ENCODE measurements at regions of chr16 and their contacts with region 1.

Region 1: GRCh38 chr16:84484579-84485254 is 19.7 kb downstream of the MEAK7 start:
- DNase-seq: peak; percentile 72 to 83 (median 74)
- ATAC-seq: peak; percentile 92
- H3K4me3 ChIP-seq: no peak overlapping the region
- H3K27ac ChIP-seq: no peak overlapping the region
- H3K4me1 ChIP-seq: peaks cover 0 to 16% of the 10 kb centered on the region in 2 experiments; a peak in 2 of 5 replicates
- H3K27me3 ChIP-seq: no peaks in the 10 kb centered on the region
- CTCF ChIP-seq: peak; percentile 88 to 94 (median 91)
- EP300 ChIP-seq: no peak
- POLR2A ChIP-seq: no peak
- RAD21 ChIP-seq: peak; percentile 95 to 97

Region 2: GRCh38 chr16:84062734-84063640 is 421.7 kb before region 1 on chr16:
- CTCF ChIA-PET with region 1: interaction called, 3 read pairs
- POLR2A ChIA-PET with region 1: no interaction called
- in situ Hi-C with region 1: loop called (anchors 10 kb)
- intact Hi-C with region 1: no loop called
- DNase-seq: peak; percentile 85 to 90 (median 86)
- ATAC-seq: peak; percentile 99
- H3K4me3 ChIP-seq: no peak overlapping the region
- H3K27ac ChIP-seq: no peak overlapping the region
- H3K4me1 ChIP-seq: peaks cover 0 to 6% of the 10 kb centered on the region in 2 experiments; a peak in 1 of 5 replicates
- H3K27me3 ChIP-seq: no peaks in the 10 kb centered on the region
- CTCF ChIP-seq: peak; percentile 85 to 99 (median 92)
- EP300 ChIP-seq: no peak
- POLR2A ChIP-seq: no peak
- RAD21 ChIP-seq: peak; percentile 64 to 84

Region 3: GRCh38 chr16:84186685-84187437 is 297.9 kb before region 1 on chr16 and contains the start of gene TAF1C:
- CTCF ChIA-PET with region 1: interaction called, 3 read pairs
- POLR2A ChIA-PET with region 1: no interaction called
- in situ Hi-C with region 1: no loop called
- intact Hi-C with region 1: loop called (anchors 5 kb)
- DNase-seq: peak; percentile 98 to 99 (median 99)
- ATAC-seq: peak; percentile 95
- H3K4me3 ChIP-seq: peak within 1 kb of the TSS; percentile 94
- H3K27ac ChIP-seq: peak within 1 kb of the TSS; percentile 78
- H3K4me1 ChIP-seq: peaks cover 5 to 34% of the 10 kb centered on the region in 2 experiments; a peak in 4 of 5 replicates
- H3K27me3 ChIP-seq: peaks cover 2 to 10% of the 10 kb centered on the region in 2 experiments; a peak in 1 of 5 replicates
- CTCF ChIP-seq: peak; percentile 98 to 99 (median 99)
- EP300 ChIP-seq: peak; percentile 62
- POLR2A ChIP-seq: peak; percentile 87
- RAD21 ChIP-seq: peak; percentile 80 to 89
- polyA plus RNA-seq, gene TAF1C: 1.5 TPM

Region 4: DNA sequence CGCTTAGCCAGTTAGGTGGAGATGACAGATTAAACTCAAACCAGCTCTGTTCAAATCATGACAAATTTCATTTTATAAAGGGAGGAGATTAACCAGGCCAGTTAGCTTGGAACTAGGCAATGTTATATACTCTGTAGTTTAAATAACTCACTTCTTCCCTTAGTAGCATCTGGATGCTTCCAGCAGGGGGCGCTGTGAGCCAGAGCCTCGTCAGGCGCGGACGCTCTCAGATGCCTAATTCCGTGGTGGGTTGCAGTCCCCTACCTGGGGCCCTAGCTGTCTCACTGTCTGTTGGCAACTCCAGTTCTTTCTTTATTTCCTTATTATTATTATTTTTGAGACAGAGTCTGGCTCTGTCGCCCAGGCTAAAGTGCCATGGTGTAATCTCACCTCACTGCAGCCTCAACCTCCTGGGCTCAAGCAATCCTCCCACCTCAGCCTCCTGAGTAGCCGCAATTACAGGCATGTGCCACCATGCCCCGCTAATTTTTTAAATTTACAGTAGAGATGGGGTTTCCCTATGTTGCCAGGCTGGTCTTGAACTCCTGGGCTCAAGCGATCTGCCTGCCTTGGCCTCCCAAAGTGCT is 207.4 kb before region 1 on chr16:
- CTCF ChIA-PET with region 1: interaction called, 15 read pairs
- POLR2A ChIA-PET with region 1: no interaction called
- in situ Hi-C with region 1: loop called (anchors 5 kb)
- intact Hi-C with region 1: loop called (anchors 1 kb)
- DNase-seq: peak; percentile 61 to 84 (median 80)
- ATAC-seq: peak; percentile 91
- H3K4me3 ChIP-seq: no peak overlapping the region
- H3K27ac ChIP-seq: no peak overlapping the region
- H3K4me1 ChIP-seq: no peaks in the 10 kb centered on the region
- H3K27me3 ChIP-seq: peaks cover 60 to 71% of the 10 kb centered on the region in 2 experiments
- CTCF ChIP-seq: peak; percentile 88 to 94 (median 90)
- EP300 ChIP-seq: no peak
- POLR2A ChIP-seq: no peak
- RAD21 ChIP-seq: peak; percentile 79 to 87